Naive thymus-derived CD4-positive, alpha-beta T cell (primary cell): ENCODE measurements at regions of chr5 and their contacts with region 1.

Region 1: DNA sequence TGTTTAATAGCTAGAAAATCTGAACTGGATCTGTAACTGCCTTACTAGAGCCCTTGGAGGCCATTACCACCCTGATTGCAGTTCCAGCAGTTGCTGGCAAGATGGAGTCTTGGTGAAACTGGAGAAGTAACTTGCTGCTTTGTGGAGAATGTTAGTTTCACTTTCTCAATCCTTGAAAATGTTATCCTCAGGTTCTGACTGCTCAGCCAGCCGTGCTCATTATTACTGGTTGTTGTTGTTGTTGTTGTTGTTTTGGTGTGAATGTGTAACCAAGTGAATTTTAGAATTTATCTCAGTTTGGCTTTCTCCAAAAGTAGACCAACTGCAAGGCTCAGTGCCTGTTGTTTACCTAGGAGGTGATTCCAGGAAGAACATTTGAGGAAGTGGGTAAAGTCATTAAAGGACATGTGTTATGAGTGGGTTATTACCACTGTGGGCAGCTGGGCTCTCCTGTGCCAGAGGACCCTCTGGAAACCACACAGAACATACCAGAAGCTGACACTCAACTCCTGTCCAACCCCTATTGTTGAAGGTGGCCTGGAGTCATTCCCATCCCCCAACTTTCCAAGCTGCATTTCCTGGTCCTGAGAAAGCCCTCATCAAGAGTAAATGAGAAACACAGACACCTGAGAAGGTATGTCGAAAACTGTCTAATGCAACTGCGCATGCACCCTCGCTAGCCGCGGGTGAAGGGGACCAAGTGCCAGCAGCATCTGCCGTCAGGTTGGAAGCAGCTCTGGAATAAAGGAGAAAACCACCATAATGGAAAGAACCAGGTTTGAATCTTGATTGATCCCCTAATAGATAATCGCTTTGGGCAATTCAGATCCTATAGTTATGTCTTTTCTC is 111.6 kb downstream of the CMYA5 start:
- DNase-seq: no peak
- ATAC-seq: no peak
- H3K4me3 ChIP-seq: no peak overlapping the region
- H3K4me3 Mint-ChIP-seq: peak overlapping the region in 5 of 10 donors; percentile 6 to 67 (median 24)
- H3K27ac ChIP-seq: no peak overlapping the region
- H3K27ac Mint-ChIP-seq: peak overlapping the region in 2 of 9 donors; percentile 69 to 82
- H3K4me1 ChIP-seq: peaks cover 0 to 11% of the 10 kb centered on the region in 2 donors
- H3K4me1 Mint-ChIP-seq: peaks cover 13 to 28% (median 21%) of the 10 kb centered on the region in 7 donors
- H3K27me3 ChIP-seq: no peaks in the 10 kb centered on the region
- H3K27me3 Mint-ChIP-seq: no peaks in the 10 kb centered on the region

Region 2: GRCh38 chr5:78025540-78025939 is 1775.7 kb before region 1 on chr5:
- CTCF ChIA-PET with region 1: no interaction called
- POLR2A ChIA-PET with region 1: no interaction called
- intact Hi-C with region 1: no loop called
- DNase-seq: no peak
- ATAC-seq: no peak
- H3K4me3 ChIP-seq: no peak overlapping the region
- H3K4me3 Mint-ChIP-seq: no peak overlapping the region
- H3K27ac ChIP-seq: no peak overlapping the region
- H3K27ac Mint-ChIP-seq: no peak overlapping the region
- H3K4me1 ChIP-seq: no peaks in the 10 kb centered on the region
- H3K4me1 Mint-ChIP-seq: peaks cover 0 to 1% (median 0%) of the 10 kb centered on the region in 7 donors
- H3K27me3 ChIP-seq: no peaks in the 10 kb centered on the region
- H3K27me3 Mint-ChIP-seq: no peaks in the 10 kb centered on the region

Region 3: DNA sequence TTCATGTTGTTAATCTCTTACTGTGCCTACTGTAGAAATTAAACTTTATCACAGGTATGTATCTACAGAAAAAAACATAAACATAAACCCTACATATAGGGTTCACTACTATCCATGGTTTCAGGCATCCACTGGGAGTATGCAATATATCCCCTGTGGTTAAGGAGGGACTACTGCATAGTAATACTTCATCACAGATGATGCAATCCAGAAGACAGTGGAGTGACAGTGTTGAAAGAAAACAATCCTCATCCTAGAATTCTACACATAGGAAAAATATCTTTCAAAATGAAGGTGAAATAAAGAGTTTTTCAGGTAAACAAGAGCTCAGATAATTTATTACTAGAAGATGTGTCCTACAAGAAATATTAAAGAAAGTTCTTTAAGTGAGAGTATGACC is 393.2 kb before region 1 on chr5:
- CTCF ChIA-PET with region 1: no interaction called
- POLR2A ChIA-PET with region 1: no interaction called
- intact Hi-C with region 1: no loop called
- DNase-seq: no peak
- ATAC-seq: no peak
- H3K4me3 ChIP-seq: no peak overlapping the region
- H3K4me3 Mint-ChIP-seq: no peak overlapping the region
- H3K27ac ChIP-seq: no peak overlapping the region
- H3K27ac Mint-ChIP-seq: no peak overlapping the region
- H3K4me1 ChIP-seq: no peaks in the 10 kb centered on the region
- H3K4me1 Mint-ChIP-seq: no peaks in the 10 kb centered on the region
- H3K27me3 ChIP-seq: no peaks in the 10 kb centered on the region
- H3K27me3 Mint-ChIP-seq: peaks cover 0 to 6% (median 0%) of the 10 kb centered on the region in 5 donors

Region 4: GRCh38 chr5:79590396-79590999 is 210.7 kb before region 1 on chr5:
- CTCF ChIA-PET with region 1: no interaction called
- POLR2A ChIA-PET with region 1: no interaction called
- intact Hi-C with region 1: no loop called
- DNase-seq: no peak
- ATAC-seq: peak; percentile 44
- H3K4me3 ChIP-seq: no peak overlapping the region
- H3K4me3 Mint-ChIP-seq: no peak overlapping the region
- H3K27ac ChIP-seq: no peak overlapping the region
- H3K27ac Mint-ChIP-seq: no peak overlapping the region
- H3K4me1 ChIP-seq: no peaks in the 10 kb centered on the region
- H3K4me1 Mint-ChIP-seq: no peaks in the 10 kb centered on the region
- H3K27me3 ChIP-seq: no peaks in the 10 kb centered on the region
- H3K27me3 Mint-ChIP-seq: peaks cover 0 to 4% (median 0%) of the 10 kb centered on the region in 5 donors

Region 5: GRCh38 chr5:79736528-79737514 is 64.4 kb before region 1 on chr5:
- CTCF ChIA-PET with region 1: no interaction called
- POLR2A ChIA-PET with region 1: no interaction called
- intact Hi-C with region 1: loop called in 1 of 2 experiments (anchors 2 kb)
- DNase-seq: peak in 7 of 9 donors; percentile 35 to 75 (median 71)
- ATAC-seq: peak; percentile 85
- H3K4me3 ChIP-seq: peak overlapping the region; percentile 25
- H3K4me3 Mint-ChIP-seq: peak overlapping the region; percentile 38 to 80 (median 71)
- H3K27ac ChIP-seq: no peak overlapping the region
- H3K27ac Mint-ChIP-seq: peak overlapping the region; percentile 0 to 71 (median 38)
- H3K4me1 ChIP-seq: peaks cover 0 to 46% of the 10 kb centered on the region in 2 donors
- H3K4me1 Mint-ChIP-seq: peaks cover 40 to 78% (median 70%) of the 10 kb centered on the region in 7 donors
- H3K27me3 ChIP-seq: no peaks in the 10 kb centered on the region
- H3K27me3 Mint-ChIP-seq: peaks cover 0 to 71% (median 39%) of the 10 kb centered on the region in 5 donors

Region 6: DNA sequence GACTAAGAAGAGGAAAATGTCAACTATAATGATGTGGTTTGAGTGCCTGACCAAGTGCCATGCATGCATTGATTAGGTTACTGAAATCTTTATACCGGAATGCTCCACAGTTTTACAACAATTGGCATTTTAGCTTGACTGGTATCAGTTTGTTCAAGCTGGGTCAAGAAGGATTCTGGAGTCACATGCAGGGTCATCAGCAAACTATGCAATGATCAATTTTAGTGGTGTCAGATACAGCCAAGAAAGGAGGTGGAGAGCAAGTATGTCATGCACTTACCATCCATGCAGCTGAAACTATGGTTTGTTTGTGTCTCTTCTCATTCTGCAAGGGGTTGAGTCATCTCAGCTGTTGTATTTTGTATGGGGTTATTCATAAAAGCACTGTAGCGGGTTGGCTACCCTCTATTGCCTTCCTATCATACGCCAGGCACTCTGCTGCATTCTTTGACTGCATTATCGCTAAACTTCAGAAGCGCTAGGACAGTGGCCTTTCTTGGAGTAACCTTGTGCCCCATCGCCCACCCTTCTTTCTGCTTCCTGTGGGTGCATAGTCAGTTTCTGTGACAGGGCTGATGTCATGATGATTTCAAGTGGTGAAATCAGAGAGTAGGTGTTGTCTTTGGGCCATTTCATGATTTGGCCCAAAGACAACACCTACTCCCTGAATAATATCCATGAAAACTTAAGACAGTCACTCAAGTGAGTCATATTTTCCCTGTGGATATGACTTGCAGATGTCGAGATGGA is 44.4 kb after region 1 on chr5:
- CTCF ChIA-PET with region 1: no interaction called
- POLR2A ChIA-PET with region 1: no interaction called
- intact Hi-C with region 1: loop called in 1 of 2 experiments (anchors 5 kb)
- DNase-seq: peak in 1 of 9 donors; percentile 43
- ATAC-seq: no peak
- H3K4me3 ChIP-seq: no peak overlapping the region
- H3K4me3 Mint-ChIP-seq: peak overlapping the region in 1 of 10 donors; percentile 45
- H3K27ac ChIP-seq: no peak overlapping the region
- H3K27ac Mint-ChIP-seq: peak overlapping the region in 1 of 9 donors; percentile 74
- H3K4me1 ChIP-seq: no peaks in the 10 kb centered on the region
- H3K4me1 Mint-ChIP-seq: peaks cover 0 to 24% (median 0%) of the 10 kb centered on the region in 7 donors
- H3K27me3 ChIP-seq: no peaks in the 10 kb centered on the region
- H3K27me3 Mint-ChIP-seq: peaks cover 5 to 17% (median 6%) of the 10 kb centered on the region in 5 donors